WTC11 (cell line): ENCODE measurements at regions of chr3 and their contacts with region 1.

Region 1: GRCh38 chr3:44761424-44762169 is at the starts of genes KIAA1143 and KIF15:
- DNase-seq: peak; percentile 98
- ATAC-seq: peak; percentile 93
- H3K4me3 Mint-ChIP-seq: peak within 1 kb of the TSS; percentile 90
- H3K27ac Mint-ChIP-seq: peak within 1 kb of the TSS; percentile 95
- H3K4me1 Mint-ChIP-seq: peaks cover 16% of the 10 kb centered on the region
- H3K27me3 Mint-ChIP-seq: no peaks in the 10 kb centered on the region; the same call in 1 of the 2 replicates
- CTCF ChIP-seq: no peak
- total RNA-seq, gene KIAA1143: 41.9 to 55.6 TPM (median 45.4 TPM) in 3 replicates
- total RNA-seq, gene KIF15: 18.4 to 23.7 TPM (median 21.1 TPM) in 3 replicates

Region 2: GRCh38 chr3:44669760-44670159 is 91.8 kb before region 1 on chr3:
- CTCF ChIA-PET with region 1: no interaction called
- POLR2A ChIA-PET with region 1: no interaction called
- DNase-seq: no peak
- ATAC-seq: no peak; the same call in 1 of the 2 replicates
- H3K4me3 Mint-ChIP-seq: no peak overlapping the region
- H3K27ac Mint-ChIP-seq: no peak overlapping the region
- H3K4me1 Mint-ChIP-seq: no peaks in the 10 kb centered on the region
- H3K27me3 Mint-ChIP-seq: peaks cover 11% of the 10 kb centered on the region
- CTCF ChIP-seq: no peak

Region 3: DNA sequence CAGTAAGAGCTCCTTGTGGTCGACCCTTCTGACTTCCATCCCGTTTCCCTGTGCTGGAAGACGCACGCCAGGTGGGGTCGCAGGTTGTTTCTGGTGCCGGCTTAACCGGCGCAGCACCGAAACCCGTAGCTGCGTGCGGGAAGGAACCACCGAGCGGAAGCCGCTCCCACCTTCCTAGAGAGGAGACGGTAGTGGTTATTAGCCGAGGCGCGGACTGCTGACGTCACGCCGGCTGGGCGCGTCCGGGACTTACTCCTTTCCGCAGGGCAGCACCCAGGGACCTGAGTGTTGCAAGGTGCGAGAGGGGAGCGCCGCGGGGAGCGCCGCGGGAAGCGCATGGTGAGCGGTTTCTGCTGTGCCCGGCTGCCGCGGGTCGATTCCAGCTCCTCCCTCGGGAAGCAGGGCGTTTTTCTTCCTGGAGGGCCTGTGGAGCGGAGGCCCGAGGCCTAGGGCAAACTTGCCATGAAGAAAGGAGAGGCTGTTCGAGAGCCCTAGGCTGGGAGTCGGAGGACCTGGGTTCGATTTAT is 32.1 kb before region 1 on chr3 and contains the start of gene ZNF501:
- CTCF ChIA-PET with region 1: no interaction called
- POLR2A ChIA-PET with region 1: interaction called, 10 read pairs
- DNase-seq: peak; percentile 95
- ATAC-seq: peak; percentile 99
- H3K4me3 Mint-ChIP-seq: peak within 1 kb of the TSS; percentile 97
- H3K27ac Mint-ChIP-seq: peak within 1 kb of the TSS; percentile 97
- H3K4me1 Mint-ChIP-seq: peaks cover 5% of the 10 kb centered on the region
- H3K27me3 Mint-ChIP-seq: peaks cover 16% of the 10 kb centered on the region
- CTCF ChIP-seq: no peak
- total RNA-seq, gene ZNF501: 8.8 to 9.0 TPM (median 8.8 TPM) in 3 replicates